Activated naive CD4-positive, alpha-beta T cell treated with anti-CD3 and anti-CD28 coated beads for 36 hours (primary cell): ENCODE measurements at regions of chr7 and their contacts with region 1.

Region 1: DNA sequence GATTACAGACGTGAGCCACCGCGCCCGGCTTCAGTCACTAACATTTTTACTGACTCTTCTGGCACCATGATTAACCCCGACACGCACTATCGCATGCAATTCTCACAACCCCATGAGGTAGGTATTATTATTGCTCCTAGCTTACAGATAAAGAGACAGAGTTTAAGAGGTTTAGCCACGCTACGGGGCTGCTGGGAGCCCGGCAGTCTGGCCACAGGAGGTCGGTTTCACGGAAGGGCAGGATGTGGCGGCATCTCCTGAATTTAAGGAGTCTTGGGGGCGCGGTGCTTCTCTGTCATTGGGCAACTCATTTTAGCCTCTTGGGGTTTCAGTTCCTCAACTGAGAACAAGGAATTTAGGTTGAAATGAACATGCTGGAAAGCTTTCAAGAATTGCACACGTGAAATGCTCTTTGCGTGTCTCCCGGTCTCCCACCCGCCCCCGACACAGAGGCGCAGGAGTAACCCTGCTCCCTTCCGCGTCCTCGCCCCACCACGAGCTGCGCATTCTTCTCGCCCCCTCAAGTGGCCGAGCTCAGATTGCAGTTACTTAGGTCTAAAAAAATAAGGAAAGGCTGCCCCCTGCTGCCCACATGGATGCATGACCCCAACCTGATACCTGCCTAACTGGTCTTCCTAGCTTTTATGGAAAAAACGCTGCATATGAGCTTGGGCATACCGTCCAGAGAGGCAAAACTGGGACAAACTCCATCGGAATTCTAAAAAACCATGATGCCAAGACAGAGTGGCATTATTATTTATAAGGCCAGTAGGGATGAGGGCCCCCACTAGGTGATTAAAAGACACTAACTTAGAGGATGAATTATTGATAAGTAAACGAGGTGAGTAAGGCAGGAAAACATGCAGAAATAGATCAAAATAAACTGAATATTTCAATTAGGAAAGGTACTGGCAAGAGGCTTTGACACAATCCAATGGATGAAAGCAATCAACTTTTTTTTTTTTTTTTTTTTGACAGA is 12.4 kb downstream of the PRSS2 start:
- DNase-seq: peak; percentile 86
- H3K4me3 Mint-ChIP-seq: peak overlapping the region; percentile 72
- H3K27ac Mint-ChIP-seq: peak overlapping the region; percentile 99
- H3K4me1 Mint-ChIP-seq: peaks cover 8% of the 10 kb centered on the region
- H3K27me3 Mint-ChIP-seq: no peaks in the 10 kb centered on the region

Region 2: DNA sequence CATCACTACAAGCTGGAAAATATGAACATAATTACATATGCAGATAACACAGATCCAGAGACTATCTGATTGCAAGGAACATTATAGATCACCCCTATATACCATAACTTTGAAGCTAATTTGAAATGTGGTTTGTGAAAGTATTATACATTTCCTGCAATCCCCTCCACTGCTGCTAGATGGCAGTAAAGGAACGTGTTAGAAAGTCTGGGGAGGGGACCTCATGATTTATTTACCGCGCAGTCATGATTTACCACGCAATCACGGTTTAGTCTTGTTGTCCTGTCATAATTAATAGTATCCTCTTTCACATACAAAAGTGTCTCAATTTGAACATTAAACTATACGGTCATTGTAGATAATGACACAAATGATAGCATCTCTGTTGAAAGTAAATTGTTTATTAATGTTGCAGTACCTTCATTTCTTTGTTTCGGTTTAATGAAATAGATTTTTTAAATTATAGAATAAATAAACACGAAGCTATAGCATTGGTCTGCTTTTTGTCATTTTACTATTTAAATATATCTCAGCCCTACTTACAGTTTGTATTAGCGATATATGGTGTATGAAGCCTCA is 179.3 kb before region 1 on chr7:
- CTCF ChIA-PET with region 1: interaction called, 3 read pairs
- intact Hi-C with region 1: loop called (anchors 1 kb)
- DNase-seq: peak; percentile 71
- H3K4me3 Mint-ChIP-seq: no peak overlapping the region
- H3K27ac Mint-ChIP-seq: peak overlapping the region; percentile 68
- H3K4me1 Mint-ChIP-seq: peaks cover 6% of the 10 kb centered on the region
- H3K27me3 Mint-ChIP-seq: no peaks in the 10 kb centered on the region

Region 3: DNA sequence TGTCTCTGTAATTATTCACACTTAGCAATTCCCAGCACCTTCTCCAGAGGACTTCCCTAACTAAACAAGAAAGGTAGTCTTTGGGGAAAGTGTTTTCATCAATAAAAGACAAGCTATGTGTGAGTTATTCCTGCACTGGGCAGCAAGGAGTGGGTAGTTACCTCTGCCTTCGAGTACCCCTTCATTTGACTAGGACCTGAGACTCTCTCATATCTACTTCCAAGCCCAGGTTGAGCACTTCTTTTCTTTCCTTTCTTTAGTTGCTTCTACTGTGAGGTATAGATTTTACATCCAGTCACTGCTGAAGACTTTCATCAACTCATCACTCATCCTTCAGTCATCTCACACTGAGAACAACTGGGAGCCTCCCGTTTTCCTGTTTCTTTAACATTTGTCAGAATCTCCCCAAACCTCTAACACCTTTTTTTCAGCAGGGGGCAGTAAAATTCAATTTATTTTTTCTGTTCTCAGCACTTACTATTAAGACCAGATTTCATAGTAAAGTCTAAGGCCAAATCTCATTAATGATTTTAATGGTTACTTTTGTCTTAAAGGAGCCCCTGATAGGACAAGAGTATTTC is 114.0 kb before region 1 on chr7:
- CTCF ChIA-PET with region 1: interaction called, 37 read pairs
- intact Hi-C with region 1: loop called (anchors 1 kb)
- DNase-seq: no peak
- H3K4me3 Mint-ChIP-seq: no peak overlapping the region
- H3K27ac Mint-ChIP-seq: peak overlapping the region; percentile 13
- H3K4me1 Mint-ChIP-seq: peaks cover 28% of the 10 kb centered on the region
- H3K27me3 Mint-ChIP-seq: no peaks in the 10 kb centered on the region

Region 4: GRCh38 chr7:142711746-142712619 is 71.2 kb before region 1 on chr7:
- CTCF ChIA-PET with region 1: interaction called, 47 read pairs
- intact Hi-C with region 1: loop called (anchors 1 kb)
- DNase-seq: peak; percentile 51
- H3K4me3 Mint-ChIP-seq: peak overlapping the region; percentile 78
- H3K27ac Mint-ChIP-seq: peak overlapping the region; percentile 89
- H3K4me1 Mint-ChIP-seq: peaks cover 43% of the 10 kb centered on the region
- H3K27me3 Mint-ChIP-seq: no peaks in the 10 kb centered on the region